ENCODE measurements at regions of chr2 and their contacts with region 1.

Region 1: DNA sequence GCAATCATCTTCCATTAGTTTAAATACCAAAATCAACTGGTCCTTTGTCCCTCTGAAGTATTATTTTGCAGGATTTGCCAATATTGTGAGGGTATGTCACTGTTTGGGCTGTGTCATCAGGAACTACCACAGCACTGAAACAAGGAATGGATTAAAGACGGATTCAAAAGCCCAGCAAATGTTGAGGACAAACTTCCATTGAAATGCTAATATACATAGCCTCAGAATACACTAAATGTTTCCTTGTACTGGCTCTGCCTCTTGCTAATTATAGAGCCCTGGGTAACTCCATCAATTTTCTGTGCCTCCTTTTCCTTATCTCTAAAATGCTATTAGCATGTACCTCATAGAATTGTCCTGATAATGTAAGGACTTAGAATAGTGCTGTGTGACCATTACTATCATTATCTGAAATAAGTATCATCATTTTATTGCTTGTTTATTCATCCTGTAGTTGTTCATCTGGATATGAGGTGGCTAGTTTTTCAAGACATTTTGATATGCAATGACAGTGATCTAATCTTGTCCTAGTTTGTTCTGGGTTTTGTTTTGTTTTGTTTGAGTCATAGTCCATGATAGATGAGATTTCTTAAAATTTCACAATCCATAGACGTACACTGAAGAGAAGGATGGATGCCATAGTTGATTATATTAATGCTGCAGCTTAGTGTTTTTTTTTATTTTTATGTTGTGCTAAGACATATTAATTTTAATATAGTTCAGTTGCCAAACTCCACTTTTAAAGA is 333.4 kb upstream of the KCNH7 start:
- DNase-seq: no peak
- H3K4me3 Mint-ChIP-seq: no peak overlapping the region
- H3K27ac Mint-ChIP-seq: no peak overlapping the region
- H3K4me1 Mint-ChIP-seq: no peaks in the 10 kb centered on the region
- H3K27me3 Mint-ChIP-seq: no peaks in the 10 kb centered on the region

Region 2: DNA sequence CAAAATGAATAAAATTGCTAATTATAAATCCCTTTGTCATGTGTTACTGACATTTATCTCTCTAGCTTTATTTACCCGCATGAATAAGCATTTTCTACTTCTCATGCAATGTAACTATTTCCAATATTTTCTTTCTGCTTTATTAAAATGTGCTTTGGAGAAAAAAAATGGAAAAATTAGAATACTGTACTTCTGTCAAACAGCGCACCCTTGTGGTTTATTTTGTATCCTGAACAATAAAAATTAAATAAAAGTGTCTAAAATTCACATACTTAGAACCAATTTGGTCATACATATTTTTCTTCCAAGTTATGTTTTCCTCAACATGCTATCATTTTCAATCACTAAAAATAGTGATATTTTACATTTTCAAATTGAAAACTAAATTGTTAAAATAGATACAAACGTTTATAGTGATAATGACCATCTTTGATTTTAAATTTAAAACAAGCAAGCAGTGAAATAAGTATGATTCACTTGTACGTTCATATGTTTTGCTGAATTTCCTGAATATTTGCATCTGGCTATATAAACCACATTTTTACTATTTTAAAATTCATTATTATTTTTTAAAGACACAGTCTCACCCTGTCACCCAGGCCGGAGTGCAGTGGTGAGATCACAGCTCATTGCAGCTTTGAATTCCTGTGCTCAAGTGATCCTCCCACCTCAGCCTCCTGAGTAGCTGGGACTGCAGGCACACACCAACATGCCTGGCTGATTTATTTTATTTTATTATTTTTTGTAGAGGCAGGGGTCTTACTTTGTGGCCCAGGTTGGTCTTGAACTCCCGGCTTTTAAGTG is 1545.2 kb after region 1 on chr2:
- intact Hi-C with region 1: loop called (anchors 10 kb)
- DNase-seq: no peak
- H3K4me3 Mint-ChIP-seq: no peak overlapping the region
- H3K27ac Mint-ChIP-seq: no peak overlapping the region
- H3K4me1 Mint-ChIP-seq: no peaks in the 10 kb centered on the region
- H3K27me3 Mint-ChIP-seq: no peaks in the 10 kb centered on the region